ENCODE measurements at regions of chr3 and their contacts with region 1.

Region 1: DNA sequence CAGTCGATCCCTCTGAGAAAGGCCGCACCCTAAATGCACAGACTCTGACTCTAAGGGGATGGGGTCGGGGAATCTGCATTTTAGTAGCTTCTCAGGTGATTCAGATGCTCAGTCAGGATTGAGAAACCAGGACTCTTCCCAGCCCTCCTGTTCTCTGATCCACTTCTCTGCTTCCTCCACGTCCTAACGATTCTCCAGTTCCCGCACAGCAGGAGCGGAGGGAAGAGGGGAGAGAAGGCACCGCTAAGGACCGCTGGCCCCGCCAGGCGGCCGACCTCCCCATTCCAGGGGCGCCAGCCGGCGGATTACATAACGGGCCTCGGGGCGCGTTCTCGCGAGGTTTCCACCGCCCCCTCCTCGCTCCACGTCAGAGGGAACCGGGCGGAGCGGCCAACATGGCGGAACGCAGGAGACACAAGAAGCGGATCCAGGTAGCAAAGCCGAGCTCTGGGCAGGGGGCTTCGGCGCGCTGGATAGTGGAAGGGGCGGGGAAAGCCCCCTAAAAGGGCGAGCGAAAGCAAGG is at the start of gene SEC62:
- DNase-seq: peak; percentile 97
- H3K4me3 Mint-ChIP-seq: peak within 1 kb of the TSS; percentile 96
- H3K27ac Mint-ChIP-seq: peak within 1 kb of the TSS; percentile 97
- H3K4me1 Mint-ChIP-seq: peaks cover 63% of the 10 kb centered on the region
- H3K27me3 Mint-ChIP-seq: no peaks in the 10 kb centered on the region
- total RNA-seq, gene SEC62: 60.0 to 73.3 TPM

Region 2: DNA sequence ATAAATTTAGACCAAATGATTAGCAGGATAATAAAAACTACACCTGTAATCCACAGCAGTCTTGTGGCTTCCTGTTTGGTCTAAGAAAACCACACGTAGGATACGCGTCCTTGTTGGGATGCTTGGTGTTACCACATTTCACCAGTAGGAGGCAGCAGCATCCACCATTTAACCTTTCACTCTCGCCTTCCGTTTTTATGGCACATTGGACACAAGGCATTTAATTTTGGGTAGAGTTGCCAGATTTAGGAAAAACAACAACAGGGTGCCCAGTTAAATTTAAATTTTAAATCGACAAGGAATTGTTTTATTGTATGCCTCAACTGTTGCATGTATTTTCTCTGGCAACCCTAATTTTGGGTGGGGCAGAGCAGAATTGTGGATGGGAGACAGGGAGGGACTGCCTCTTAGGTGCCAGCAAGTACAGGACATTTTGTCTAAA is 103.0 kb before region 1 on chr3:
- CTCF ChIA-PET with region 1: interaction called, 7 read pairs
- intact Hi-C with region 1: loop called (anchors 1 kb)
- DNase-seq: peak; percentile 86
- H3K4me3 Mint-ChIP-seq: no peak overlapping the region
- H3K27ac Mint-ChIP-seq: no peak overlapping the region
- H3K4me1 Mint-ChIP-seq: peaks cover 25% of the 10 kb centered on the region
- H3K27me3 Mint-ChIP-seq: no peaks in the 10 kb centered on the region

Region 3: DNA sequence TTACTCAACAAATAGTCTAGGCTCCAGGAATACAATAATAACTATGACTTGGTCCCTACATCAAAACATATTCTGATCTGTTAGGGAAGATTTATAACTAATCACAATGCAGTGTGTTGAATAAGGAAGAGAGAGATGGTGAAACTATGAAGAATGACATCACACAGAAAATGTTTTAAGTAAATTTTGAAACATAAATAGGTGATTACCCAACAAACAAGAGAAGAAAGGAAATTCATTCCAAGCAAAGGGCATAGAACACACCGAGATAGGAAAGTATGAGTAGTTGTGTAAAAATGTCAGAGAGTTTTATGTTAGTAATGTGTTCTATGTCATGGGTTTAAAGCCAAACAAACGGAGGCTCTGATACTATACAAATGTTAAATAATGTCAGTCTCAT is 13.6 kb after region 1 on chr3:
- CTCF ChIA-PET with region 1: interaction called, 11 read pairs
- intact Hi-C with region 1: no loop called
- DNase-seq: no peak
- H3K4me3 Mint-ChIP-seq: no peak overlapping the region
- H3K27ac Mint-ChIP-seq: peak overlapping the region; percentile 12
- H3K4me1 Mint-ChIP-seq: peaks cover 23% of the 10 kb centered on the region
- H3K27me3 Mint-ChIP-seq: no peaks in the 10 kb centered on the region

Region 4: DNA sequence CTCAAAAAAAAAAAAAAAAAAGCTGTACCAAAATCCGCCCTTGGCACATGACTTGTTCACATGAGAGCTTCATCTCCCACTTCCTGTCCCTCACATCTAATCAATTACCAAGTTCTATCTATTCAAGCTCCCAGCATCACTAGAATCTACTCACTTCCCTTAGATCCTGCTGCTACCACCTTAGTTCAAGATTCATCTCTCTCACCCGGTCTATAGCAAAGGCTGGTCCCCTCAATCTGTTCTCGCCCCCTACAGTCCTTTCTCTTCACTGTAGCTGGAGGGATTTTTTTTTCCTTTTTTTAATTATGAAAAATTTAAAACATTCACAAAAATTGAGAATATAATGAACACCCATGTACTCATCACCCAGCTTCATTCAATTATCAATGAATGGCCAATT is 54.6 kb after region 1 on chr3:
- CTCF ChIA-PET with region 1: interaction called, 5 read pairs
- intact Hi-C with region 1: loop called (anchors 1 kb)
- DNase-seq: no peak
- H3K4me3 Mint-ChIP-seq: no peak overlapping the region
- H3K27ac Mint-ChIP-seq: no peak overlapping the region
- H3K4me1 Mint-ChIP-seq: peaks cover 21% of the 10 kb centered on the region
- H3K27me3 Mint-ChIP-seq: no peaks in the 10 kb centered on the region

Region 5: GRCh38 chr3:170221924-170222646 is 255.6 kb after region 1 on chr3 and contains the start of gene PRKCI:
- CTCF ChIA-PET with region 1: no interaction called
- intact Hi-C with region 1: loop called (anchors 1 kb)
- DNase-seq: peak; percentile 95
- H3K4me3 Mint-ChIP-seq: peak within 1 kb of the TSS; percentile 78
- H3K27ac Mint-ChIP-seq: peak within 1 kb of the TSS; percentile 92
- H3K4me1 Mint-ChIP-seq: peaks cover 24% of the 10 kb centered on the region
- H3K27me3 Mint-ChIP-seq: no peaks in the 10 kb centered on the region
- total RNA-seq, gene PRKCI: 20.8 to 23.0 TPM

Measured in activated naive CD4-positive, alpha-beta T cell treated with anti-CD3 and anti-CD28 coated beads for 36 hours (primary cell).